ENCODE measurements at regions of chr12 and their contacts with region 1.

Region 1: GRCh38 chr12:55724226-55724939 is 4.2 kb downstream of the RDH5 start:
- DNase-seq: peak; percentile 79
- H3K4me3 ChIP-seq: no peak overlapping the region
- H3K27ac ChIP-seq: no peak overlapping the region
- H3K4me1 ChIP-seq: peaks cover 14% of the 10 kb centered on the region
- H3K27me3 ChIP-seq: no peaks in the 10 kb centered on the region
- CTCF ChIP-seq: peak; percentile 75

Region 2: GRCh38 chr12:55392032-55392795 is 332.2 kb before region 1 on chr12:
- CTCF ChIA-PET with region 1: no interaction called
- POLR2A ChIA-PET with region 1: no interaction called
- intact Hi-C with region 1: no loop called
- DNase-seq: no peak
- H3K4me3 ChIP-seq: no peak overlapping the region
- H3K27ac ChIP-seq: no peak overlapping the region
- H3K4me1 ChIP-seq: no peaks in the 10 kb centered on the region
- H3K27me3 ChIP-seq: peaks cover 49% of the 10 kb centered on the region
- CTCF ChIP-seq: no peak

Region 3: DNA sequence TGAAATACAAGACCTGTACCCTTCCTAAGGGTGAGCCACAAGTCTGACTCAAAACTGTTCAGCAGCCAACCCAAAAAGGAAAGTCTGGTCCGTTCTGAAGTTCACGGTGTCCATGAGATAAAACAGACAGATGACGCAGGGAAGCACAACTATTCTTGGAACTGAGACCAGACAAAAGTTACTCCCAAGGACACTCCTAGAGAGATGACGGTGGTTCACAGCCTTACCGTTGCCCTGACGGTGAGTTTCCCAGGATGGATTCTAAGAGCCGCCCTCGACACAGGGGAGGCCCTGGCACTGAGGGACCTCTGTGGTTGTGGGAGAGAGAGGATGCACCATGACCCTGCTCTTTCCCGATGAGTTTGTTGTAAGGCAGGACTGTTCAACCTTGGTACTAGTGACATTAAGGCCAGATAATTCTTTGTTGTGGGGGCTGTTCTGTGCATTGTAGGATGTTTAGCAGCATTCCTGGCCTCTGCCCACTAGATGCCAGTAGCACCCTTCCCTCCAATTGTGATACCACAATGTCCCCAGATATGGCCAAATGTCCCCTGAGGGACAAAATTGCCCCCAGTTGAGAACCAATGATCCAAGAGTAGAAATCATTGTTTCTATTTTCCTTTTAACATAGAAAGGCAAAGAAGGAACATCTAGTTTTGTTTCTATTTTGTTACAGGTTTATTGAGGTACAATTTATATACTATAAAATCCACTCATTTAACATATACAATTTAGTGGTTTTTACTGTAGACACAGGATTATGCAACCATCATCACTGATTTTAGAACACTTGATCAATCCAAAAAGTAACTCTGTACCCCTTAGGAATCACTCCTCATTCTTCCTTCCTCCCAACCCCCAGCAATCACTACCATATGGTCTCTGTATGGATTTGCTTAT is 64.6 kb before region 1 on chr12:
- CTCF ChIA-PET with region 1: interaction called, 4 read pairs
- POLR2A ChIA-PET with region 1: no interaction called
- intact Hi-C with region 1: loop called (anchors 5 kb)
- DNase-seq: peak; percentile 63
- H3K4me3 ChIP-seq: no peak overlapping the region
- H3K27ac ChIP-seq: no peak overlapping the region
- H3K4me1 ChIP-seq: no peaks in the 10 kb centered on the region
- H3K27me3 ChIP-seq: no peaks in the 10 kb centered on the region
- CTCF ChIP-seq: peak; percentile 63